Activated CD4-positive, alpha-beta T cell treated with anti-CD3 and anti-CD28 coated beads for 36 hours (primary cell): ENCODE measurements at regions of chr6 and their contacts with region 1.

Region 1: DNA sequence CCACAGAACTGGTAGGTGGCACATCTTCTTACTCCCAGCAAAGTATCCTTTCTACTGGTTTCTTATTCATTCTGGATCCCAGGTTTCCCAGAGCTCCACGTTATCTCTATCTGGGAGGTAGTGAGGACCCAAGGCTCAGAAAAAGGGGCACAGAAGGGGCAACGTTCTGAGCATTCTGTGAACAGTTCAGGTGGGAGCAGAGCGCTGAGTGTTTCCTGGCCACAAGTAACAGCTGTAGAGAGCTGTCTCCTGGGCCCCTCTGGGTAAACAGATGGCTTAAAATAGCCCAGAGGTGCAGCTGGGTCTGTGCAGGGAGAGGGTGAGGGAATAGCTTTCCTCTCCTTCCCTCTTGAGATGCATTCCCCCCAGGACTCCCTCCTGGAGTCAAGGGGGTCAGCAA is 2.1 kb downstream of the APOBEC2 start:
- DNase-seq: no peak
- ATAC-seq: no peak
- H3K4me3 Mint-ChIP-seq: no peak overlapping the region
- H3K27ac Mint-ChIP-seq: no peak overlapping the region
- H3K4me1 Mint-ChIP-seq: peaks cover 17% of the 10 kb centered on the region
- H3K27me3 Mint-ChIP-seq: no peaks in the 10 kb centered on the region

Region 2: GRCh38 chr6:40492187-40492586 is 563.0 kb before region 1 on chr6:
- CTCF ChIA-PET with region 1: no interaction called
- POLR2A ChIA-PET with region 1: no interaction called
- intact Hi-C with region 1: no loop called
- DNase-seq: no peak
- ATAC-seq: no peak
- H3K4me3 Mint-ChIP-seq: no peak overlapping the region
- H3K27ac Mint-ChIP-seq: no peak overlapping the region
- H3K4me1 Mint-ChIP-seq: no peaks in the 10 kb centered on the region
- H3K27me3 Mint-ChIP-seq: peaks cover 5% of the 10 kb centered on the region

Region 3: DNA sequence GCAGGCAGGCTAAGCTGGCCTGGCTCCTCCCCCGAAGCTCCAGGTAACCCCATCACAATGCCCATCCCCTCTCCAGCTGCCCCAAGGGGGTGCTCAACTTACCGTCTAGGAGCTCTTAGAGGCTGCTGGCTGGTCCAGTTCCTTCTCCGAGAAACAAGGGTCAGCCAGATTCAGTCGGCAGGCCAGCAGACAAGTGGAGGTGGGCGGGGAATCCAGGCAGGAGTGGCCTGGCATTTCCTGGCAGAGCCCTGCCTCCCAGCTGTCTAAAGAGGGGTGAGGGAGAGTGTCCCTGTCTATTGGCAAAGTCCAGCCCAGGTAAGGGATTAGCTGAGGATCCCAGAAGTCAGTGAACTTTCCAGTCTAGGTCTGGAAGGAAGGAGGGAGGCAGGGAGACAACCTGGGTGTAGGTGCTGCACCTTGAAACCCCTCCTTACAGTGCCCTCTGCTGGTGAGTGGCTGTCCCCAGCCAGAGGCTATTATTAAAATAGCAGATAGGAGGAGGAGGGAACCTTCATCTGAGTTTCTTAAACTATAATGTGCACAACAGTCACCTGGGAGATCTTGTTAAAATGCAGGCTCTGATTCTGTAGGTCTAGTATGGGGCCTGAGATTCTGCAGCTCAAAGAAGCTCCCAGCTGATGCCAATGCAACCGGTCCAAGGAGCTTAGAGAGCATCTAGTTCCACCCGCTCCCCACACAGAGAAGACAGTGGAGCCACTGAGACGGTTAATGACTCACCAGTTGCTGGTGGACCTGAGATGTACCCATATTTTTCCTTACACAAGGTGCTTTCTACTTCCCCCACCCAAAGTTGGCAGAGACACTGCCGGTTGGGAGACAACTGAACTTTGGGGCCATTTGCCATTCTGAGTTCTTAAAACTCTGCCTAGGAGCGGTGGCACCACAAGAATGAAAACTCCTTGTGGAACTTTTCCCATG is 15.8 kb before region 1 on chr6 and contains the start of gene UNC5CL:
- CTCF ChIA-PET with region 1: interaction called, 13 read pairs
- POLR2A ChIA-PET with region 1: no interaction called
- intact Hi-C with region 1: no loop called
- DNase-seq: peak; percentile 79
- ATAC-seq: peak; percentile 77
- H3K4me3 Mint-ChIP-seq: no peak within 1 kb of the TSS
- H3K27ac Mint-ChIP-seq: no peak within 1 kb of the TSS
- H3K4me1 Mint-ChIP-seq: peaks cover 8% of the 10 kb centered on the region
- H3K27me3 Mint-ChIP-seq: no peaks in the 10 kb centered on the region
- total RNA-seq, gene UNC5CL: 1.8 to 1.9 TPM

Region 4: DNA sequence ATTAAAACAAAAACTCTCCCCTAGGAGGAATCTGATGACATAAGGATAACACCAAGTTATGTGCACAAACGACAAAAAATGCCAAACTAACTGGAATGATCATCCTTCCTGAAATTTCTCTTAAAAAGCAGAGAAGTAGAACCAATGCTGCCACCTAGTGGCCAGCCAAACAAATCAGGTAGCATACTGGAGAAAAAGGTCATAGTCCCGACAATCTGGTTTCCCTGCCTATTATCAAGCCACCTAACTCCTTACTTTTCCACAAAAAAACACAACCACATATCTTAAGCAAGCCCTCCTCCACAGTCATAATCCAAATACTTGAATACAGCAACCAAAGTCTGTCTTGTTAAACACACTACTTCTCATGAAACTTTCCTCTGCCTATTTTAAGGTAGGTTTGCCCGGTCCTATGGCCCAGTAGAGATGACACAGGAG is 11.7 kb after region 1 on chr6:
- CTCF ChIA-PET with region 1: interaction called, 17 read pairs
- POLR2A ChIA-PET with region 1: interaction called, 3 read pairs
- intact Hi-C with region 1: no loop called
- DNase-seq: peak; percentile 78
- ATAC-seq: no peak
- H3K4me3 Mint-ChIP-seq: no peak overlapping the region
- H3K27ac Mint-ChIP-seq: peak overlapping the region; percentile 43
- H3K4me1 Mint-ChIP-seq: peaks cover 32% of the 10 kb centered on the region
- H3K27me3 Mint-ChIP-seq: no peaks in the 10 kb centered on the region